Prostate gland (tissue), 2 donors: ENCODE measurements at regions of chr4 and their contacts with region 1.

Region 1: DNA sequence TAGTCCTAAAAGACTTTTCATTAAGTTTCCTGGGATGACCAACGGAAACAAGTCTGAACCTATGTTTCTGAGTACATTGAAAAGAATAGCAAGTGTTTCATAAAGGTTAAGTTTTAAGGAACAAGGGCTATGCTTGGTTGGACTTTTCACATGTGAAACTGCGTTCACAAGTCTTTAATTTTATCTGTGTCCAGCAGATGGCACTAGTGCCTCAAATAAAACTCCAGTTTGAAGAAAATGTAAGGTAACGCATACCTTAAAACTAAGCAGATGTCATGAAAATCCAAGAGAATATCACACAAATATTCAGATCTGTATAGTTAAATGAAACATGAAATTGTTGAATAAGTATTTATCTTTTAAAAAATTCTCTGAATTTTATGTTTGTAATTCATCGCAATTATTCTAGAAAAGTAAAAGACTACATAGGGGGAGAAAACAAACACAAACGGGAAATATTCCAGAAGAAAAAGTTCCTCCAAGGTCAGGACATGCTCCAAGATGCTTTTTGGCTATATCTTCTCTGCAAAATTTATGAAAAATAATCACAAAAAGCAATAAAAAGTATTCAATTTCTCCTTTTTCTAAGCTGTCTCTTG is 89.6 kb upstream of the MAD2L1 start:
- DNase-seq: peak; percentile 56
- H3K4me3 ChIP-seq: no peak overlapping the region
- H3K27ac ChIP-seq: no peak overlapping the region
- H3K4me1 ChIP-seq: no peaks in the 10 kb centered on the region
- H3K27me3 ChIP-seq: no peaks in the 10 kb centered on the region
- CTCF ChIP-seq: peak in 3 of 4 experiments; percentile 75 to 83 (median 76)
- POLR2A ChIP-seq: no peak

Region 2: GRCh38 chr4:120071192-120071795 is 84.9 kb before region 1 on chr4:
- intact Hi-C with region 1: loop called (anchors 10 kb)
- DNase-seq: no peak
- H3K4me3 ChIP-seq: no peak overlapping the region
- H3K27ac ChIP-seq: no peak overlapping the region
- H3K4me1 ChIP-seq: no peaks in the 10 kb centered on the region
- H3K27me3 ChIP-seq: no peaks in the 10 kb centered on the region
- CTCF ChIP-seq: peak; percentile 27 to 79 (median 46)
- POLR2A ChIP-seq: no peak

Region 3: DNA sequence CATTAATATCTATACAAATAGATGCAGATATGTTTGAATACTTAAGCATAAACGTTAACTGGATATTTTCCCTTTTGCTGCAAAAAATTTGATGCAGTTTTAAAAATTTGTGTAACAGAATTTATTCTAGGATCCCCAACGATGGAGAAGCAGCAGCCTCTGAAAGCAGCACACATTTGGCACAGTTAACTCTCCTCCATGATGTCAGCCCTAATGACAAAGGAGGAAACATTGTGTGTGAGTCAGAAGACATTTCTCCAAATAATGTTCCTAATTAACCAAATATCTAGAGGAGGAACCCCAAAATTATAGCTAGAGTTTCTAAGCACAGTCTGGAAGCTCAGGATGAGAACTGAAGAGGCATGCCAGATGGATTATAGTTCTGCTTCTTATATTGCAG is 192.3 kb after region 1 on chr4:
- intact Hi-C with region 1: no loop called
- DNase-seq: no peak
- H3K4me3 ChIP-seq: no peak overlapping the region
- H3K27ac ChIP-seq: no peak overlapping the region
- H3K4me1 ChIP-seq: no peaks in the 10 kb centered on the region
- H3K27me3 ChIP-seq: no peaks in the 10 kb centered on the region
- CTCF ChIP-seq: no peak
- POLR2A ChIP-seq: no peak

Region 4: GRCh38 chr4:120819805-120820437 is 663.7 kb after region 1 on chr4:
- intact Hi-C with region 1: no loop called
- DNase-seq: no peak
- H3K4me3 ChIP-seq: no peak overlapping the region
- H3K27ac ChIP-seq: no peak overlapping the region
- H3K4me1 ChIP-seq: no peaks in the 10 kb centered on the region
- H3K27me3 ChIP-seq: no peaks in the 10 kb centered on the region
- CTCF ChIP-seq: no peak
- POLR2A ChIP-seq: no peak

Region 5: GRCh38 chr4:121096629-121097028 is 940.4 kb after region 1 on chr4:
- intact Hi-C with region 1: loop called (anchors 2 kb)
- DNase-seq: no peak
- H3K4me3 ChIP-seq: no peak overlapping the region
- H3K27ac ChIP-seq: no peak overlapping the region
- H3K4me1 ChIP-seq: no peaks in the 10 kb centered on the region
- H3K27me3 ChIP-seq: no peaks in the 10 kb centered on the region
- CTCF ChIP-seq: peak; percentile 21 to 67 (median 58)
- POLR2A ChIP-seq: no peak

Region 6: DNA sequence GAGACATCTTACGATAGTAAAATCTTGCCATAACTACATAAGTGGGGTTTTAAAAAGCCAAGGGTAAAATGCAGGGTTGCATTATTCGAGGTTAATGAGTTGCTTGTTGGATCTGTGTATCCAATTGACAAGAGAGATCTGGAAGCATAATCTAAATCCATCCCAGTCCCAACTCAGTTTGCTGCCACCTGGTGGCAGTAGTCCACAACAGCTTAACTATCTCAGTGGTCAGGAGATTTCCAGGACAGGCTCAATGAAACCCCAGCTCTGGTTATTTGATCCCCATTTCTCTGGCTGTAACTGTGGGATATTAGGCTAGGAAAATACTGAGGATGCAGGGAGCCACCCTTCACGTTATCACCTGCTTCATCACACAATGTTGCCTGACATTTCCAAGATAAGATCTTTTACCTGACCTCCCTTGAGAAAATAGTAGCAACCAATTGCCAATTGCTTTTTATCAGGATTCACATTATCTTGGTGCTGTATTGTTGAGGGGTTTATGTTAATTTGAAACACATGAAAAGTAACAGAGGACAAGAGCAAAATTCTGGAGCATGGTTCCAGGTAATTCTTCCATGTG is 1096.1 kb after region 1 on chr4:
- intact Hi-C with region 1: loop called (anchors 10 kb)
- DNase-seq: peak; percentile 59
- H3K4me3 ChIP-seq: no peak overlapping the region
- H3K27ac ChIP-seq: no peak overlapping the region
- H3K4me1 ChIP-seq: no peaks in the 10 kb centered on the region
- H3K27me3 ChIP-seq: no peaks in the 10 kb centered on the region
- CTCF ChIP-seq: peak; percentile 70 to 85 (median 72)
- POLR2A ChIP-seq: no peak